PC-3 (cell line): ENCODE measurements at regions of chr5 and their contacts with region 1.

Region 1: GRCh38 chr5:149162401-149163084 is 21.2 kb downstream of the ABLIM3 start:
- DNase-seq: peak; percentile 98
- ATAC-seq: peak; percentile 92
- H3K4me3 ChIP-seq: no peak overlapping the region
- H3K27ac ChIP-seq: peak overlapping the region; percentile 72
- H3K4me1 ChIP-seq: peaks cover 35% of the 10 kb centered on the region
- H3K27me3 ChIP-seq: no peaks in the 10 kb centered on the region
- CTCF ChIP-seq: no peak

Region 2: GRCh38 chr5:149133795-149134780 is 28.5 kb before region 1 on chr5:
- CTCF ChIA-PET with region 1: no interaction called
- POLR2A ChIA-PET with region 1: no interaction called
- intact Hi-C with region 1: loop called (anchors 1 kb)
- DNase-seq: peak; percentile 100
- ATAC-seq: peak; percentile 76
- H3K4me3 ChIP-seq: peak overlapping the region; percentile 1; the same call in 1 of the 2 replicates
- H3K27ac ChIP-seq: peak overlapping the region; percentile 86
- H3K4me1 ChIP-seq: peaks cover 64% of the 10 kb centered on the region
- H3K27me3 ChIP-seq: no peaks in the 10 kb centered on the region
- CTCF ChIP-seq: no peak

Region 3: DNA sequence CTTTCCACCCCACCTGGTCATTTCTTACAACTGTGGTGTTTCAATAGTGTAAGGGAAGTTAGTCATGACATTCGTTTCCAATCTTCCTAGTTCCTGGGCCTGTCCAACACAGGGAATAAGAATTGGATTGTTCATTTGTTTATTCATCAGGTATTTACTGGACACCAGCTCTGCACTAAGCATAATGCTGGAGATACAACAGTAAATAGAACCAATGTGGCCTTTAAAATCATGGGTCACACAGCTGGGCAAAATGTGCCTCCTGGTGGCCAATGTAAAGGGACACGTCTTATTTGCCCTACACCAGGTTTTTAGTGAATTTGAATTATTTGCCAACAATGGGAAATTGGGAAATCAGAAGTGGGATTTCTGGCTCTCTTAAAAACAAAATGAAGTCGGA is 10.8 kb before region 1 on chr5:
- CTCF ChIA-PET with region 1: interaction called, 3 read pairs
- POLR2A ChIA-PET with region 1: interaction called, 4 read pairs
- intact Hi-C with region 1: loop called (anchors 1 kb)
- DNase-seq: peak; percentile 77
- ATAC-seq: peak; percentile 68
- H3K4me3 ChIP-seq: no peak overlapping the region
- H3K27ac ChIP-seq: peak overlapping the region; percentile 23
- H3K4me1 ChIP-seq: peaks cover 28% of the 10 kb centered on the region
- H3K27me3 ChIP-seq: no peaks in the 10 kb centered on the region
- CTCF ChIP-seq: peak; percentile 93

Region 4: DNA sequence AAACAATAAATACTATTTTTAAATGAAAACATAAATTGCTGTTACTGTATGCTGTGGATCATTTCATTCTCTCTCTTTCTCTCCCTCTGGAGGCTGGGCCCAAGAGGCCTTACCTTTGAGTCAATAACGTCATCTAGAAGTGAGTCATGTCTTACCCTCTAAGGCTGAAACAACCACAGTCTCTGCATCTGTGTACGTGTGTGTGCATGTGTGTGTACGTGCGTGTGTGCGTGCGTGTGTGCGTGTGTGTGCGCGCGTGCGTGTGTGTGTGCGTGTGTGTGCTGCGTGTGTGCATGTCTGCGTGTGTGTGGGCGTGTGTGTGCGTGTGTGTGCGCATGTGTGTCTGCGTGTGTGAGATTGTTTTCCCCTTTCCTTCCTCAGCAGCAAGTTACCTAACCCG is 230.2 kb after region 1 on chr5:
- CTCF ChIA-PET with region 1: no interaction called
- POLR2A ChIA-PET with region 1: no interaction called
- intact Hi-C with region 1: no loop called
- DNase-seq: peak; percentile 72
- ATAC-seq: peak; percentile 93
- H3K4me3 ChIP-seq: no peak overlapping the region
- H3K27ac ChIP-seq: no peak overlapping the region
- H3K4me1 ChIP-seq: peaks cover 6% of the 10 kb centered on the region; the same call in 1 of the 2 replicates
- H3K27me3 ChIP-seq: no peaks in the 10 kb centered on the region
- CTCF ChIP-seq: no peak